MCF 10A (cell line): ENCODE measurements at regions of chr3 and their contacts with region 1.

Region 1: GRCh38 chr3:179147873-179148615 is at the start of gene PIK3CA:
- DNase-seq: peak; percentile 99
- H3K4me3 Mint-ChIP-seq: no peak within 1 kb of the TSS
- H3K27ac Mint-ChIP-seq: no peak within 1 kb of the TSS
- H3K4me1 Mint-ChIP-seq: peaks cover 23% of the 10 kb centered on the region
- H3K27me3 Mint-ChIP-seq: no peaks in the 10 kb centered on the region
- CTCF ChIP-seq: no peak
- total RNA-seq, gene PIK3CA: 18.1 and 20.7 TPM in 2 replicates

Region 2: DNA sequence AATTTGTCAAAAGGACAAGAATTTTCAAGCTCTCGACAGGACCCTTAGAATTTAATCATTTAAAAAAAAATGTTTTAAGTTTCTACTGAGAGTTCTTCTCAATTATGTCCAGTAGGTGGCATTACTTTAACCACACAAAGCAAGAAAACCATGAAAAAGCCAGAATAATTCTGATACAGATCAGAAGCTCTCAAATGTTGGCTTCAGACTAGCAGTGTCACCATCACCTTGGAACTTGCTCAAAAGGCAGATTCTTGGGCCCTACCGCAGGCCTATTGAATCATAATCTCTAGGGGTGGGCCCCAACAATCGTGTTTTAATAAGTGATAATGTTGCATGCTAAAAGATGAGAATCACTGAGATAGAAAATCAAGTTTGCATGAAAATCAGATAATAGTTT is 711.3 kb before region 1 on chr3:
- CTCF ChIA-PET with region 1: no interaction called
- POLR2A ChIA-PET with region 1: no interaction called
- intact Hi-C with region 1: loop called (anchors 1 kb)
- DNase-seq: peak; percentile 37
- H3K4me3 Mint-ChIP-seq: no peak overlapping the region
- H3K27ac Mint-ChIP-seq: no peak overlapping the region
- H3K4me1 Mint-ChIP-seq: peaks cover 11% of the 10 kb centered on the region
- H3K27me3 Mint-ChIP-seq: no peaks in the 10 kb centered on the region
- CTCF ChIP-seq: peak; percentile 50

Region 3: DNA sequence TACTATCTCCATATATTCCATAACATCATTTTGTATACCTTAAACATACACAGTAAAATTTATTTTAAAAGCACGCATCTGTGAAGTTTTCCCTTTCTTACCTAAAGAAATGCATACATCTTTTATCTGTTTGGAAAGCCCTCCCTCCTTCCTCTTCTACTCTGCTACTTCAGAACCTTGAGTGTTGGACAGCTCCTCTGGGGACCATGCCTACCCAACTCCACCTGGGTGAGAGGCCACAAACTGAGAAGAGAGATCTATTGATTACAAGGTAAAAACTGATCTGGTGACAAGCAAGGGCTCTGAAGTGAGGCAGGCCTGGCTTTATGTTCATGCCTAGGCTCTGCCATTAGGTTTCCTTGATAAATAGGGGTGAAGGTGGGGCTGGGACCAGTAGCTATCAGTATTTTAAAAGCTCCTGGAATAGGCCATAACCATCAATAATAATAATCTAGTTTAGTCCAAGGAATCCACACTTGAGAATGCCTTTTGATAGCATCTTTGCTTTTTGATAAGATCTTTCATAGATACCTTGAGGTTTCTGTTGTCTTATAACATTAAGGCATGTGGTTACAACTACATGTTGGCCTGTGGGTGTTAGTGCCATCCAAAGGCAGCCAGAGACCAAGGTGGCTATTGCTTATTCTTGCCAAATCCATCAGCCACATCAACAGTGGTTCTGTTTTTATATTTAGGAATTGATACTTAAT is 463.0 kb before region 1 on chr3:
- CTCF ChIA-PET with region 1: no interaction called
- POLR2A ChIA-PET with region 1: no interaction called
- intact Hi-C with region 1: no loop called
- DNase-seq: peak; percentile 47
- H3K4me3 Mint-ChIP-seq: no peak overlapping the region
- H3K27ac Mint-ChIP-seq: no peak overlapping the region
- H3K4me1 Mint-ChIP-seq: no peaks in the 10 kb centered on the region
- H3K27me3 Mint-ChIP-seq: no peaks in the 10 kb centered on the region
- CTCF ChIP-seq: no peak

Region 4: DNA sequence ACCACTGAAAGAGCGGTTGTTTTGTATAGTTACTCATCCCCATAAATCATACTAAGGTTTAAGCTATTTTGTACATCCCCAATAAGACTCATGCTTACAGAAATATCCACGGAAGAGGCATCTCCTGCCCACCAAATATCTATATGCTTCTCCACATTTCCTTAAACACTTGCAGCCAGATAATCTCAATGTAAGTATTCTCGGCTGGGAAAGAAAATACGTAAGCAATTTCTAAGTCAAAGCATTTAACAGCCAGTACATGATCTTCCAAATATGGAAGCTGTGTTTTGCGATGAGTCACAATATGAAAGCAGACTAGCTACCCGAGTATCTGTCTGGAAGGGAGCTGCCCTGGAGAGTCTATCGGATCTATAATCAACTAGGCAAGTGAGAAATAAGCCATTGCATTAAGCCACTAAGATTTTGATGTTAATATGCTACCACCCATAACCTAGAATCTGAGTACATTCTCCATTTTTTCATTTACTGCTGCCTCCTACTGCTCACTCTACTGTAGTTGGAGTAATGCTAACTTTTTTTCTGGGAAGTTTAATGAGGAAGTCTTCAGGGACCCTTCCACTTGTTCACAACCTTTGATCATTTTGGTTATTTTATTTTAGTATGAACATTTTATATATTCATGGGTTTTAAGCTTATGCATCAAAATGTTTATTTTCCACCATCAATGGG is 49.5 kb before region 1 on chr3:
- CTCF ChIA-PET with region 1: interaction called, 24 read pairs
- POLR2A ChIA-PET with region 1: interaction called, 20 read pairs
- intact Hi-C with region 1: no loop called
- DNase-seq: peak; percentile 74
- H3K4me3 Mint-ChIP-seq: peak overlapping the region; percentile 48
- H3K27ac Mint-ChIP-seq: peak overlapping the region; percentile 35
- H3K4me1 Mint-ChIP-seq: peaks cover 7% of the 10 kb centered on the region
- H3K27me3 Mint-ChIP-seq: no peaks in the 10 kb centered on the region
- CTCF ChIP-seq: peak; percentile 22

Region 5: GRCh38 chr3:179158336-179159039 is 10.4 kb after region 1 on chr3:
- CTCF ChIA-PET with region 1: interaction called, 3 read pairs
- POLR2A ChIA-PET with region 1: interaction called, 40 read pairs
- intact Hi-C with region 1: no loop called
- DNase-seq: no peak
- H3K4me3 Mint-ChIP-seq: no peak overlapping the region
- H3K27ac Mint-ChIP-seq: no peak overlapping the region
- H3K4me1 Mint-ChIP-seq: peaks cover 13% of the 10 kb centered on the region
- H3K27me3 Mint-ChIP-seq: no peaks in the 10 kb centered on the region
- CTCF ChIP-seq: no peak

Region 6: DNA sequence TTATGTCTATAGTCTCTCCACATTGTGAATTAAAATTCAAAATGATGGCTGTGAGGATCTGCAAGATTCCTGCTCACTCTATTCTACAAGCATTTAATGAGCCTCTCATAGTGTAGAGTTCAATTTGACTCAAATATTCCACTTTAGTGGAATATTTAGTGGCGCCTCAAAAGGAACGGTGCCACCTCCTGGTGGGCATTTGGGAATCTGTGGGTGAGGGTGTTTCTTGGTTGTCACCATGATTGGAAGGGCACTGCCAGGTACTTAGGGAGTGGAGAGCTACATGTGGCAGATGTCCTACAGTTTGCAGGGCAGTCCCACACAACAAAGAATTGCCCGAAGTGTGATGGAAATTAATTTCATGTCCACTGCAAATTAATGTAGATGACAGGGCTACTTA is 124.3 kb after region 1 on chr3:
- CTCF ChIA-PET with region 1: interaction called, 4 read pairs
- POLR2A ChIA-PET with region 1: no interaction called
- intact Hi-C with region 1: loop called (anchors 1 kb)
- DNase-seq: peak; percentile 29
- H3K4me3 Mint-ChIP-seq: no peak overlapping the region
- H3K27ac Mint-ChIP-seq: no peak overlapping the region
- H3K4me1 Mint-ChIP-seq: no peaks in the 10 kb centered on the region
- H3K27me3 Mint-ChIP-seq: no peaks in the 10 kb centered on the region
- CTCF ChIP-seq: no peak

Region 7: GRCh38 chr3:179562591-179563270 is 414.7 kb after region 1 on chr3 and contains the start of gene ACTL6A:
- CTCF ChIA-PET with region 1: no interaction called
- POLR2A ChIA-PET with region 1: interaction called, 4 read pairs
- intact Hi-C with region 1: loop called (anchors 1 kb)
- DNase-seq: peak; percentile 100
- H3K4me3 Mint-ChIP-seq: peak within 1 kb of the TSS; percentile 97
- H3K27ac Mint-ChIP-seq: peak within 1 kb of the TSS; percentile 76
- H3K4me1 Mint-ChIP-seq: peaks cover 19% of the 10 kb centered on the region
- H3K27me3 Mint-ChIP-seq: no peaks in the 10 kb centered on the region
- CTCF ChIP-seq: no peak
- total RNA-seq, gene ACTL6A: 46.2 and 57.1 TPM in 2 replicates